Dorsolateral prefrontal cortex (tissue), 120 donors: ENCODE measurements at regions of chr11 and their contacts with region 1.

Region 1: GRCh38 chr11:27158722-27159679 is 118.4 kb downstream of the BBOX1 start:
- DNase-seq: peak in 6 of 10 donors; percentile 37 to 77 (median 44)
- H3K4me3 ChIP-seq: no peak overlapping the region
- H3K27ac ChIP-seq: no peak overlapping the region
- H3K27me3 ChIP-seq: no peaks in the 10 kb centered on the region
- CTCF ChIP-seq: peak; percentile 59 to 88 (median 76)

Region 2: GRCh38 chr11:26297189-26297975 is 861.6 kb before region 1 on chr11:
- intact Hi-C with region 1: loop called (anchors 5 to 10 kb)
- DNase-seq: no peak
- H3K4me3 ChIP-seq: no peak overlapping the region
- H3K27ac ChIP-seq: no peak overlapping the region
- H3K27me3 ChIP-seq: no peaks in the 10 kb centered on the region
- CTCF ChIP-seq: peak; percentile 43 to 81 (median 70)

Region 3: GRCh38 chr11:26753723-26754504 is 405.1 kb before region 1 on chr11:
- intact Hi-C with region 1: loop called (anchors 2 to 5 kb)
- DNase-seq: peak in 5 of 10 donors; percentile 8 to 69 (median 58)
- H3K4me3 ChIP-seq: no peak overlapping the region
- H3K27ac ChIP-seq: peak overlapping the region in 2 of 59 donors; percentile 3 to 7
- H3K27me3 ChIP-seq: no peaks in the 10 kb centered on the region
- CTCF ChIP-seq: peak; percentile 50 to 88 (median 73)